Activated CD4-positive, alpha-beta T cell treated with anti-CD3 and anti-CD28 coated beads for 36 hours (primary cell): ENCODE measurements at regions of chr2 and their contacts with region 1.

Region 1: GRCh38 chr2:209208211-209208610 is 215.6 kb upstream of the MAP2 start:
- DNase-seq: peak; percentile 58
- ATAC-seq: no peak
- H3K4me3 Mint-ChIP-seq: peak overlapping the region; percentile 19
- H3K27ac Mint-ChIP-seq: no peak overlapping the region
- H3K4me1 Mint-ChIP-seq: no peaks in the 10 kb centered on the region
- H3K27me3 Mint-ChIP-seq: no peaks in the 10 kb centered on the region

Region 2: GRCh38 chr2:207819839-207820784 is 1388.1 kb before region 1 on chr2:
- CTCF ChIA-PET with region 1: no interaction called
- POLR2A ChIA-PET with region 1: no interaction called
- intact Hi-C with region 1: no loop called
- DNase-seq: no peak
- ATAC-seq: no peak
- H3K4me3 Mint-ChIP-seq: no peak overlapping the region
- H3K27ac Mint-ChIP-seq: no peak overlapping the region
- H3K4me1 Mint-ChIP-seq: no peaks in the 10 kb centered on the region
- H3K27me3 Mint-ChIP-seq: no peaks in the 10 kb centered on the region

Region 3: GRCh38 chr2:208175069-208175839 is 1033.0 kb before region 1 on chr2:
- CTCF ChIA-PET with region 1: no interaction called
- POLR2A ChIA-PET with region 1: no interaction called
- intact Hi-C with region 1: loop called in 1 of 2 experiments (anchors 5 kb)
- DNase-seq: peak; percentile 76
- ATAC-seq: peak; percentile 99
- H3K4me3 Mint-ChIP-seq: no peak overlapping the region
- H3K27ac Mint-ChIP-seq: no peak overlapping the region
- H3K4me1 Mint-ChIP-seq: peaks cover 4% of the 10 kb centered on the region
- H3K27me3 Mint-ChIP-seq: no peaks in the 10 kb centered on the region

Region 4: DNA sequence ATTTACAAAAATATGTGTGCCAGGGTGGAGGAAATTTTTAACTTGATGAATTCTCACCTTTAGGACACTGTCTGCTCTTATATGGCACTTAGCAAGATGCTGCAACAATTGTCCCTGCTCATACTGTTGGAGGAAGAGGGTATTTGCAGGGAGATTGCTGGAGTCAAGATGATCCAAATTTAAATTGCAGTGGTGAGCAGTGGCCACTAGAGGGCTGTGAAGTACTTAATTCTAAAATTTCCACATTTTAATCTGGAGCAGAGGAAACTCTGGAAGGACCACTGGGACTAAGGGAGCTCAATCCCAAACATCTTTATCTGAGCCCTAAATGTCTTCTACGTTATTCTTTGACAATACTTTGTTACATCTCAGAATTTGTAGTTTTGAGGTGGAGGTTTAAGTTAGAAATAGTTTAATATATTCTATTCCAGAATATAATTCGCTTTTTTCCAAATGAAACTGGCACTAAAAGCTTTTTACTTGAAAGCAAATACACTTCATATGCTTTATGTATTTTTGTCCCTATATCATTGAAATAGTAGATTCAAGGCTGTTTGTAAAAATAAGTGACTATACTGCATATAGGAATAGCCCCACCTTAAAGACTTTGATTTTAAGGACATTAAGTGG is 834.6 kb before region 1 on chr2:
- CTCF ChIA-PET with region 1: no interaction called
- POLR2A ChIA-PET with region 1: no interaction called
- intact Hi-C with region 1: loop called (anchors 1 to 10 kb)
- DNase-seq: peak; percentile 37
- ATAC-seq: peak; percentile 47
- H3K4me3 Mint-ChIP-seq: no peak overlapping the region
- H3K27ac Mint-ChIP-seq: no peak overlapping the region
- H3K4me1 Mint-ChIP-seq: no peaks in the 10 kb centered on the region
- H3K27me3 Mint-ChIP-seq: no peaks in the 10 kb centered on the region

Region 5: GRCh38 chr2:208407667-208408066 is 800.5 kb before region 1 on chr2:
- CTCF ChIA-PET with region 1: interaction called, 6 read pairs
- POLR2A ChIA-PET with region 1: no interaction called
- intact Hi-C with region 1: loop called in 1 of 2 experiments (anchors 5 kb)
- DNase-seq: peak; percentile 27
- ATAC-seq: no peak
- H3K4me3 Mint-ChIP-seq: no peak overlapping the region
- H3K27ac Mint-ChIP-seq: no peak overlapping the region
- H3K4me1 Mint-ChIP-seq: peaks cover 9% of the 10 kb centered on the region
- H3K27me3 Mint-ChIP-seq: peaks cover 46% of the 10 kb centered on the region

Region 6: DNA sequence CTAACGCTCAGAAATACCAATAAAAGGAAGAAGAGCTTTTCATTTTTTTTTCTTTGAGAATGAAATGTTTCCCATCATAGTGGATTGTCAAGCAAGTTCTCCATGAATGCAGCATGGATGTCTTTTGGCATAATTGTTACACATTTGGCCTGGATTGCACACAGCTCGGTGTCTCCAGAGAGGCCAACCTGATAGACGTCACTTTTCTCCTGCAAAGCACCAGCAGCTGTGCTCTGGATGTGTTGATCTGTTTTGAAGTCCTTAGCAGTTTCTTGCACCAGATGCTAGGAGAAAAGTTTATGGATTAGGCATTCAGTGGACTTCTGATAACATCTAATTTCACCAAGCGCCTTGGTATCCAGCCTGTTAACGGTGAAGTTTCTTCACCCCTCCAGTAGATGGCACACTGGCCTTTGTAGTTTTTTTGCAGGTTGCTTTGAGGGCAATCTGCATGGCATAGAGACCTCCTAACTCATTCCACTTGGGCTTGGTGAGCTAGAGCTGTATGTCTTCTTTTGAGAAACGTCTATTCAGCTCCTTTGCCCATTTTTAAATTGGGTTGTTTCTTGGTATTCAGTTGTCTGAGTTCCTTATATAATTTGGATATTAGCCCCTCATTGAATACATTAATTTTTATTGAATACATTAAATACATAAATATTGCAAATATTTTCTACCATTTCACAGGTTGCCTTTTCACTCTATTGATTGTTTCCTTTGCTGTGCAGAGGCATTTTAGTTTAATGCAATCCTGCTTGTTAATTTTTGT is 741.9 kb before region 1 on chr2:
- CTCF ChIA-PET with region 1: no interaction called
- POLR2A ChIA-PET with region 1: no interaction called
- intact Hi-C with region 1: loop called (anchors 2 to 5 kb)
- DNase-seq: peak; percentile 36
- ATAC-seq: no peak
- H3K4me3 Mint-ChIP-seq: no peak overlapping the region
- H3K27ac Mint-ChIP-seq: no peak overlapping the region
- H3K4me1 Mint-ChIP-seq: no peaks in the 10 kb centered on the region
- H3K27me3 Mint-ChIP-seq: peaks cover 9% of the 10 kb centered on the region

Region 7: GRCh38 chr2:209351636-209352035 is 143.4 kb after region 1 on chr2:
- CTCF ChIA-PET with region 1: no interaction called
- POLR2A ChIA-PET with region 1: no interaction called
- intact Hi-C with region 1: no loop called
- DNase-seq: no peak
- ATAC-seq: no peak
- H3K4me3 Mint-ChIP-seq: no peak overlapping the region
- H3K27ac Mint-ChIP-seq: no peak overlapping the region
- H3K4me1 Mint-ChIP-seq: no peaks in the 10 kb centered on the region
- H3K27me3 Mint-ChIP-seq: no peaks in the 10 kb centered on the region